ENCODE measurements at regions of chr14 and their contacts with region 1.

Region 1: DNA sequence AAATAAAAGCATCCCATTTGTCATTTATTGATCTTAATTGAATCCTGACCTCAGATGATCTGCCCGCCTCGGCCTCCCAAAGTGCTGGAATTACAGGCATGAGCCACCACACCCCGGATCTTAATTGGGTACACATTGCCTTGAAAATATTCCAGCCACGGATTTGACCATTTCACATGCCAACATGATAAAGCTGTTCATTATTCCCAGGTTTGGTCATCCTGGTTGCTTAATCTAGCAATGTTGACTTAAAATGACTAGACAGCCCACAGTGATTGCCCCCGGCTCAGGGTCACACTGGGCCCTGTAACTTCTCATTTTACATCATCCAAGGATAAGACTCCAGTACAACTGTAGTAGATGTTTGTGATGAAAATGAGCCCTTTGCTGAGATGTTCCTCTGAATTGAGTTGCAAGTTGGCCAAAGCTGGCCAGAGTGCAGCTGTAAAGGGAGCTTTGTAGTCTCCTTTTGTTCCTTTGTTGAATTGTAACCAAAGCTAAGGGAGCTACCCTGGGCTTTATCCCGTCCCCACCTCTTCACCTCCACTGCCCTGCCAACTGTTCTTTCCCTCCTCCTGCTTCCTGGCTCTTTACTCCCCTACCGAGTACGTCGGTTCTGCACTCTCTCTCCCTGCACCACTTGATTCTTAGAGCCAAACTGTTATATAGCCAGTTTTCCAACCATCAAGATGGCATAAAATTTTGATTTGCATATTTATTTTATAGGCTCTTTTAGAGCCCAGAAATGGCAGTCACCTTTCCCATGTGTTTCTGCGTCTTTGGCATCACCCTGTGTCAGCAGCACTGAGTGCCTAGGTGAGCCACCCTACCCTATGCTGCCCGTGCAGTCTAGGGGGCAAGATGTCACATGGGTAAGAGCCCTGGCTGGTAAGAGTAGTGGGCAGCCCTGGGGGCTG is 141.3 kb upstream of the HIF1A start:
- DNase-seq: peak; percentile 85 to 97
- ATAC-seq: peak; percentile 91 to 95
- H3K4me3 ChIP-seq: no peak overlapping the region
- H3K27ac ChIP-seq: peak overlapping the region; percentile 96 to 99
- H3K4me1 ChIP-seq: peaks cover 86% of the 10 kb centered on the region
- CTCF ChIP-seq: no peak
- EP300 ChIP-seq: peak; percentile 100
- POLR2A ChIP-seq: no peak
- RAD21 ChIP-seq: peak; percentile 41 to 76

Region 2: GRCh38 chr14:61537563-61538463 is 16.2 kb before region 1 on chr14:
- CTCF ChIA-PET with region 1: interaction called, 15 read pairs
- POLR2A ChIA-PET with region 1: interaction called, 12 read pairs
- DNase-seq: peak; percentile 83 to 93
- ATAC-seq: peak; percentile 85
- H3K4me3 ChIP-seq: no peak overlapping the region
- H3K27ac ChIP-seq: peak overlapping the region; percentile 96 to 99
- H3K4me1 ChIP-seq: peaks cover 68% of the 10 kb centered on the region
- CTCF ChIP-seq: no peak
- EP300 ChIP-seq: peak; percentile 88 to 93; a peak in 4 of 5 replicates
- POLR2A ChIP-seq: no peak
- RAD21 ChIP-seq: peak in 1 of 2 experiments; percentile 53; a peak in 2 of 5 replicates

Region 3: DNA sequence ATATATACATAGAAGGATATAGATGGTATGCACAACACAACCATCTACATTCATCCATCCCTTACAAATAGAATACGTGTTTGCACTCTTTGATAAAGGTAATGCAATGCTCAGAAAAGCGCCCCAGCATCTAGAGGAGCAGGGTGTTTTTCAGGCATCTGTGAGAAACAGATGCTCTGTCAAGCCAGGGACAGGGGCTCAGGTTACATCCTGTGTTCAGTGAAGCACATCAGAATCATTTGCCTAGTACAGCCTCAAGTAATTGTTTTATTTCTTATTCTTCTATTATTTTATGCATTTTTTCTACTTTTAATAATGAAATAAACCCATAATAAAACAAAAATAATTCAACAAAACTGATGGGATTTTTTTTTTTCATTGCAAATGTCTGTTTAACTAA is 90.9 kb after region 1 on chr14:
- CTCF ChIA-PET with region 1: no interaction called
- POLR2A ChIA-PET with region 1: no interaction called
- DNase-seq: no peak
- ATAC-seq: peak in 1 of 2 experiments; percentile 34; a peak in 1 of 6 replicates
- H3K4me3 ChIP-seq: no peak overlapping the region
- H3K27ac ChIP-seq: no peak overlapping the region
- H3K4me1 ChIP-seq: no peaks in the 10 kb centered on the region
- CTCF ChIP-seq: no peak
- EP300 ChIP-seq: no peak
- POLR2A ChIP-seq: no peak
- RAD21 ChIP-seq: no peak

Region 4: DNA sequence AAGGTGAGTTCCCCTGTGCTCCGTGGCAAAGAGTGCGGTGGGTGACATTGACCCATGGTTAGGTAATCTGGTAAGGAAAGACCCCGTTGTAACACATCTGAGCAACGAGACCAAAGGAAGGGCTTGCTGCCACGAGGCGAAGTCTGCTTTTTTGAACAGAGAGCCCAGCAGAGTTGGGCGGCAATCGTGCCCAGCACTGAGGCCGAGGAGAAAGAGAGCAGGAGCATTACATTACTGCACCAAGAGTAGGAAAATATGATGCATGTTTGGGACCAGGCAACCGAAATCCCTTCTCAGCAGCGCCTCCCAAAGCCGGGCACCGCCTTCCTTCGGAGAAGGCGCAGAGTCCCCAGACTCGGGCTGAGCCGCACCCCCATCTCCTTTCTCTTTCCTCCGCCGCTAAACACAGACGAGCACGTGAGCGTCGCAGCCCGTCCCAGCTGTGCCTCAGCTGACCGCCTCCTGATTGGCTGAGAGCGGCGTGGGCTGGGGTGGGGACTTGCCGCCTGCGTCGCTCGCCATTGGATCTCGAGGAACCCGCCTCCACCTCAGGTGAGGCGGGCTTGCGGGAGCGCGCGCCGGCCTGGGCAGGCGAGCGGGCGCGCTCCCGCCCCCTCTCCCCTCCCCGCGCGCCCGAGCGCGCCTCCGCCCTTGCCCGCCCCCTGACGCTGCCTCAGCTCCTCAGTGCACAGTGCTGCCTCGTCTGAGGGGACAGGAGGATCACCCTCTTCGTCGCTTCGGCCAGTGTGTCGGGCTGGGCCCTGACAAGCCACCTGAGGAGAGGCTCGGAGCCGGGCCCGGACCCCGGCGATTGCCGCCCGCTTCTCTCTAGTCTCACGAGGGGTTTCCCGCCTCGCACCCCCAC is 141.1 kb after region 1 on chr14 and contains the start of gene HIF1A:
- CTCF ChIA-PET with region 1: interaction called, 5 read pairs
- POLR2A ChIA-PET with region 1: interaction called, 107 read pairs
- DNase-seq: peak; percentile 93 to 98
- ATAC-seq: peak; percentile 90 to 93
- H3K4me3 ChIP-seq: peak within 1 kb of the TSS; percentile 88
- H3K27ac ChIP-seq: peak within 1 kb of the TSS; percentile 98
- H3K4me1 ChIP-seq: peaks cover 9% of the 10 kb centered on the region; the same call in 2 of the 3 replicates
- CTCF ChIP-seq: peak; percentile 29; the same call in 2 of the 3 replicates
- EP300 ChIP-seq: no peak
- POLR2A ChIP-seq: peak; percentile 95
- RAD21 ChIP-seq: peak; percentile 39 to 60; a peak in 4 of 5 replicates
- polyA plus RNA-seq, gene HIF1A: 284 and 383 TPM in 2 replicates

Measured in A549 (cell line).